Panc1 (cell line): ENCODE measurements at regions of chr5 and their contacts with region 1.

Region 1: GRCh38 chr5:115544436-115545350 is at the start of gene FEM1C:
- DNase-seq: peak; percentile 51
- ATAC-seq: peak; percentile 99
- H3K4me3 ChIP-seq: peak within 1 kb of the TSS; percentile 85 to 92
- H3K27ac ChIP-seq: peak within 1 kb of the TSS; percentile 84
- H3K4me1 ChIP-seq: peaks cover 22% of the 10 kb centered on the region
- H3K27me3 ChIP-seq: no peaks in the 10 kb centered on the region
- CTCF ChIP-seq: no peak
- total RNA-seq, gene FEM1C: 10.4 TPM

Region 2: GRCh38 chr5:115324021-115324420 is 220.7 kb before region 1 on chr5:
- CTCF ChIA-PET with region 1: no interaction called
- POLR2A ChIA-PET with region 1: interaction called, 13 read pairs
- in situ Hi-C with region 1: no loop called
- intact Hi-C with region 1: no loop called
- DNase-seq: no peak
- ATAC-seq: no peak
- H3K4me3 ChIP-seq: no peak overlapping the region
- H3K27ac ChIP-seq: no peak overlapping the region
- H3K4me1 ChIP-seq: no peaks in the 10 kb centered on the region
- H3K27me3 ChIP-seq: peaks cover 4% of the 10 kb centered on the region; the same call in 1 of the 2 replicates
- CTCF ChIP-seq: no peak

Region 3: DNA sequence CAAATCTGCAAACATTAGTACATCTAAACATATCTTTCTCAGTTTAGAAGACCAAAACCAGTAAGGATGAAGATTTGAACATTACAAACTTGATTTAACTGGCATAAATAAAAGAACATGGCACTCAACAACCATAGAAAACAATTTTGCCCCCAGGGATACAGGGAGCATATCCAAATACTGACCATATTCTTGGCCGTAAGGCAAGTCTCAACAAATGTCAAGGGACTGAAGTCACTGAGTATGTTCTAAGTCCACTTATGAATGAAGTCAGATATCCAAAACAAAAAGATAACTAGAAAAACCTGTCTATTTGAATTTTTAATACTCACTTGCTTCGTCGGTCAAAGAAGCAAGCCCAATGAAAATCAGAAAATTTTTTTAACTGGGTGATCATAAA is 14.3 kb before region 1 on chr5:
- CTCF ChIA-PET with region 1: no interaction called
- POLR2A ChIA-PET with region 1: interaction called, 11 read pairs
- in situ Hi-C with region 1: no loop called
- intact Hi-C with region 1: no loop called
- DNase-seq: no peak
- ATAC-seq: no peak
- H3K4me3 ChIP-seq: no peak overlapping the region
- H3K27ac ChIP-seq: no peak overlapping the region
- H3K4me1 ChIP-seq: peaks cover 5% of the 10 kb centered on the region; the same call in 1 of the 2 replicates
- H3K27me3 ChIP-seq: no peaks in the 10 kb centered on the region
- CTCF ChIP-seq: no peak

Region 4: GRCh38 chr5:115586601-115587048 is 41.9 kb after region 1 on chr5:
- CTCF ChIA-PET with region 1: no interaction called
- POLR2A ChIA-PET with region 1: no interaction called
- in situ Hi-C with region 1: no loop called
- intact Hi-C with region 1: no loop called
- DNase-seq: no peak
- ATAC-seq: 0 out of 2 replicates have a peak, but pooled peaks have one; percentile 38
- H3K4me3 ChIP-seq: no peak overlapping the region
- H3K27ac ChIP-seq: no peak overlapping the region
- H3K4me1 ChIP-seq: no peaks in the 10 kb centered on the region
- H3K27me3 ChIP-seq: no peaks in the 10 kb centered on the region
- CTCF ChIP-seq: peak; percentile 67

Region 5: DNA sequence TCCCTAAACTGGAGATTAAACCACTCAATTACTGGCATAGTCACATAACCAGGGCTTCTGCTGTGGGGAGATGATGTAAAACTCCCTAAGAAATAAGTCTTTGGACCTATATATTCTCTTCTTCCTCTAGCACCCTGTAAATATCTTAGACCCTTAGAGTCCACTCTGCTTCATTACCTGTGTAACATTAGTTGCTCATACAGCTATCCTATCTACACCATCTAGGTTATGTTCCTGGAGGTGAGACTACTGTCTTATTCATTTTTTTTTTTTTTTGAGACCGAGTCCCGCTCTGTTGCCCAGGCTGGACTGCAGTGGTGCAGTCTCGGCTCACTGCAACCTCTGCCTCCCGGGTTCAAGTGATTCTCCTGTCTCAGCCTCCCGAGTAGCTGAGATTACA is 67.2 kb after region 1 on chr5:
- CTCF ChIA-PET with region 1: no interaction called
- POLR2A ChIA-PET with region 1: interaction called, 10 read pairs
- in situ Hi-C with region 1: no loop called
- intact Hi-C with region 1: no loop called
- DNase-seq: no peak
- ATAC-seq: no peak
- H3K4me3 ChIP-seq: no peak overlapping the region
- H3K27ac ChIP-seq: no peak overlapping the region
- H3K4me1 ChIP-seq: no peaks in the 10 kb centered on the region
- H3K27me3 ChIP-seq: no peaks in the 10 kb centered on the region
- CTCF ChIP-seq: no peak

Region 6: DNA sequence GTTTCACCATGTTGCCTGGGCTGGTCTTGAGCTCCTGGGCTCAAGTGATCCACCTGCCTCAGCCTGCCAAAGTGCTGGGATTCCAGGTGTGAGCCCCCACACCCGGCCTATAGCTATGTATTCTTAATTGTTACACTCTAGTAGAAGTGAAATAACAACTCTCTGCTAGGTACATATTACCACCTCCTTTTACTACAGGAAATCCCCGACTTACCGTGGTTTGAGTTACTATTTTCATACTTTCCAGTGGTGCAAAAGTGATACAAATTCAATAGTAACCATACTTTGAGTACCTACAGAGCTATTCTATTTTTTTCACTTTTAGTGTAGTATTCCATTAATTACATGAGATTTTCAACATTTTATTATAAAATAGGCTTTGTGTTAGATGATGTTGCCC is 488.3 kb after region 1 on chr5:
- CTCF ChIA-PET with region 1: no interaction called
- POLR2A ChIA-PET with region 1: interaction called, 15 read pairs
- in situ Hi-C with region 1: no loop called
- intact Hi-C with region 1: no loop called
- DNase-seq: no peak
- ATAC-seq: no peak
- H3K4me3 ChIP-seq: no peak overlapping the region
- H3K27ac ChIP-seq: no peak overlapping the region
- H3K4me1 ChIP-seq: peaks cover 7% of the 10 kb centered on the region; the same call in 1 of the 2 replicates
- H3K27me3 ChIP-seq: no peaks in the 10 kb centered on the region
- CTCF ChIP-seq: no peak